K562 (cell line): ENCODE measurements at regions of chr19 and their contacts with region 1.

Region 1: DNA sequence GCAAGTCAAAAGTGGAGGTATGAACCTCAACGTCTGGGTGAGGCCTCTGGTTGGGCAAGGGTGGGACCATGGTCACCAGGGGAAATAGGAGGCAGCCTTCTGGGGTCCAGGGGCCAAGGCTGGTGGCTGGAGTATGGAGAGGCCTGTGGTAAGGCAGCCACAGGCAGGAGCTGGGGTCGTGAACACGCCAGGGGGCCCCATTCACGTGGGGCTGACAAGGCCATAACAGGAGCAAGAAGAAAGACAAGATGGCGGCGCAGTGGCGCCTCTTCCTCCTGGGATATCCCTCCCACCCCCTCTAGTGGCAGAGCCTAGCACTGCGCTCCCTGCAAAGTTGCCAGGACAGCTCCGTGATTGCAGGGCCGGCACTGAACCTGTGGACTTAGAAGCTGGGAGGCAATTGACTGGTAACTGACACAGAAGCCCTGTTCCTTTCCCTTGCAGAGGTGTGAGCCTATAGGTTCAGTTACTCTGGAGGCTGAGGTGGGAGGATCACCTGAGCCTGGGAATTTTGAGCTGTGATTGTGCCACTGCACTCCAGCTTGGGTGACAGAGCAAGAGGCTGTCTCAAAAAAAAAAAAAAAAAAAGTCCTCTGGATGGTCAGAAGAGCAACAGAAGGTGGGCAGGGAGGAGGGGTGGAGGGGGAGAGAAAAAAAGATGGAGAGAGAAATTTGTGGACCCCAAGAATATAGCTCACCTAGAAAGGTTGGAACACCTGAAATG is 19.7 kb upstream of the EDDM13 start:
- DNase-seq: peak; percentile 80 to 93 (median 81)
- ATAC-seq: peak; percentile 92
- H3K4me3 ChIP-seq: no peak overlapping the region
- H3K27ac ChIP-seq: peak overlapping the region; percentile 52; the same call in 2 of the 3 replicates
- H3K4me1 ChIP-seq: peaks cover 23 to 24% of the 10 kb centered on the region in 2 experiments
- H3K27me3 ChIP-seq: no peaks in the 10 kb centered on the region
- CTCF ChIP-seq: peak; percentile 94 to 96 (median 95)
- EP300 ChIP-seq: no peak
- POLR2A ChIP-seq: no peak
- RAD21 ChIP-seq: peak; percentile 61 to 87

Region 2: DNA sequence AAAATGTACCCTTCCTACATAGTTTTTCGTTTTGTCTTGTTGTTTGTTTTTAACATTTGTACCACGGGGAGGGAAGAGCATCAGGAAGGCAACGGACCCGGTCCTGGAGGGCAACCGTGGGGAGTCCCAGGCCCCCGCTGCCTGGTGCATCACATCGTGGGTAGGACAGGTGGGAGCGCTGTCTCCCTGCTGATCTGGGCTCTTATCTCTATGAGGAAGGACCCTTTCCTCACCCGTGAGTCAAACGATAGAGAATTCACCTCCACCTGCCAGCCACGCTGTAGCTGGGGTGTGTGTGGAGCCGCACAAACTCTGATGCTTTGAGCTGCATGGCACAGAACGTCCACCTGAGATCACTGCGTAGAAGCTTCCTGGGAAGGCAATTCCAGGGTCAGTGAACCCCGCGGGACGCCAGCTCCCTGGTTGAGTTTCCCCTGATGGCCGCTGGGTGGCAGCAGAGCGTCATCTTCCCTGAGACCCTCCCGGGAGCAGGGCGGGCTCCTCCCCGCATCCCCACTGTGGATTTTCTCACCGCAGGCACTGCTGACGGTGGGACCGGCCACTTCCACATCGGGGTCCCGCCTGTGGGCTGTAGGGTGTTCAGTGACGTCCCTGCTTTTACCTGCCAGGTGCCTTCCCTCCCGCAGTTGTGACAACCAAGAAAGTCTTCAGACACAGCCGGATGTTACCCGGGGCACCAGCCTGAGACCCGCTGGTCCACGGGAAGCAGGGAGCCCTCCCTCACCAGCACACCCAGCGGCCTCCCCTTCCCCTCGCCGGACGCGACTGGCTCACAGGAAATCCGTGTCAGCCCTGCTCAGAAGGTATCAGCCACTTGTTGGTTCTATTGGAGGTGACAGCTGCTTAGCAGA is 186.5 kb before region 1 on chr19:
- CTCF ChIA-PET with region 1: interaction called, 6 read pairs
- POLR2A ChIA-PET with region 1: no interaction called
- in situ Hi-C with region 1: no loop called
- intact Hi-C with region 1: loop called (anchors 2 kb)
- DNase-seq: peak; percentile 76 to 93 (median 88)
- ATAC-seq: peak; percentile 93
- H3K4me3 ChIP-seq: no peak overlapping the region
- H3K27ac ChIP-seq: no peak overlapping the region
- H3K4me1 ChIP-seq: peaks cover 3 to 7% of the 10 kb centered on the region in 2 experiments; a peak in 4 of 5 replicates
- H3K27me3 ChIP-seq: peaks cover 5 to 11% of the 10 kb centered on the region in 2 experiments; a peak in 1 of 5 replicates
- CTCF ChIP-seq: peak; percentile 82 to 92 (median 84)
- EP300 ChIP-seq: no peak
- POLR2A ChIP-seq: no peak
- RAD21 ChIP-seq: peak; percentile 70 to 85

Region 3: GRCh38 chr19:56155124-56155687 is 97.7 kb before region 1 on chr19:
- CTCF ChIA-PET with region 1: no interaction called
- POLR2A ChIA-PET with region 1: no interaction called
- in situ Hi-C with region 1: no loop called
- intact Hi-C with region 1: loop called (anchors 1 kb)
- DNase-seq: peak; percentile 43 to 54 (median 50)
- ATAC-seq: peak; percentile 94
- H3K4me3 ChIP-seq: no peak overlapping the region
- H3K27ac ChIP-seq: no peak overlapping the region
- H3K4me1 ChIP-seq: peaks cover 0 to 4% of the 10 kb centered on the region in 2 experiments; a peak in 1 of 5 replicates
- H3K27me3 ChIP-seq: no peaks in the 10 kb centered on the region
- CTCF ChIP-seq: peak; percentile 66 to 74 (median 69)
- EP300 ChIP-seq: no peak
- POLR2A ChIP-seq: no peak
- RAD21 ChIP-seq: peak; percentile 35 to 60; a peak in 3 of 4 replicates

Region 4: DNA sequence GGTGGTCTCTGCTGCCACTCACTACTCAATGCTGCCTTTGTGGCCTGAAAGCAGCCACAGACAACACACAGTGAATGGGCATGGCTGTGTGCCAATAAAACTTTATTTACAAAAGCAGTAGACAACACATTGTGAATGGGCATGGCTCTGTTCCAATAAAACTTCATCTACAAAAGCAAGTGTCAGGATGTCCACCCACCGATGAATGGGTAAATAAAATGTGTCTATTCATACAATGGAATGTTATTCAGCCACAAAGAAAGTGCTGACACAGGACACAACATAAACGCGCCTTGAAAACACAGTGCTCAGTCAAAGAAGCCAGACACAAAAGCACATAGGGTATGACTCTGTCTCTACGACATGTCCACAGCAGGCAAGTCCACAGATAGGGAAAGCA is 41.7 kb after region 1 on chr19:
- CTCF ChIA-PET with region 1: no interaction called
- POLR2A ChIA-PET with region 1: no interaction called
- in situ Hi-C with region 1: no loop called
- intact Hi-C with region 1: no loop called
- DNase-seq: no peak
- ATAC-seq: no peak
- H3K4me3 ChIP-seq: no peak overlapping the region
- H3K27ac ChIP-seq: no peak overlapping the region
- H3K4me1 ChIP-seq: no peaks in the 10 kb centered on the region
- H3K27me3 ChIP-seq: no peaks in the 10 kb centered on the region
- CTCF ChIP-seq: no peak
- EP300 ChIP-seq: no peak
- POLR2A ChIP-seq: no peak
- RAD21 ChIP-seq: no peak

Region 5: DNA sequence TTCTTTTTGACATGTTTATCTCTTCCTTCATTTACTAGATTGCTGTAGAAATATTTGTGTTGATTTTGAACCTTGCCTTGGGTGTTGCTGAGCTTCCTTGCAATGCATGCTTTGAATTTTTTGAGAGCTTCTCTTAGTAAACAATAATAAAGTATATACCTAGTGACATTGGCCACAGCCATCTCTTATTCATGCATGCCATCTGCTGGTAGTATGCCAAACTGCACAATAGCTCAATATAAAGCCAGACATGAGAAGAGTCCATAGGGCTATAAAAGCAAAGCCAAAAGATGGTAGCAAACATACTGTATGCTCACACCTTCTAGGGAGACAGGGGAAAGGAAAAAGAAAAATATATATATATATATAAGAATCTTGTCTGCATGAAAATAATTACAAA is 80.6 kb after region 1 on chr19:
- CTCF ChIA-PET with region 1: interaction called, 46 read pairs
- POLR2A ChIA-PET with region 1: interaction called, 7 read pairs
- in situ Hi-C with region 1: no loop called
- intact Hi-C with region 1: loop called (anchors 1 kb)
- DNase-seq: peak; percentile 48 to 72 (median 55)
- ATAC-seq: peak; percentile 89
- H3K4me3 ChIP-seq: no peak overlapping the region
- H3K27ac ChIP-seq: no peak overlapping the region
- H3K4me1 ChIP-seq: no peaks in the 10 kb centered on the region
- H3K27me3 ChIP-seq: no peaks in the 10 kb centered on the region
- CTCF ChIP-seq: peak; percentile 69 to 94 (median 85)
- EP300 ChIP-seq: no peak
- POLR2A ChIP-seq: no peak
- RAD21 ChIP-seq: peak; percentile 92 to 98

Region 6: GRCh38 chr19:56547535-56547934 is 294.7 kb after region 1 on chr19:
- CTCF ChIA-PET with region 1: no interaction called
- POLR2A ChIA-PET with region 1: no interaction called
- in situ Hi-C with region 1: no loop called
- intact Hi-C with region 1: loop called (anchors 10 kb)
- DNase-seq: peak; percentile 20 to 35 (median 33)
- ATAC-seq: no peak
- H3K4me3 ChIP-seq: no peak overlapping the region
- H3K27ac ChIP-seq: no peak overlapping the region
- H3K4me1 ChIP-seq: no peaks in the 10 kb centered on the region
- H3K27me3 ChIP-seq: no peaks in the 10 kb centered on the region
- CTCF ChIP-seq: peak; percentile 46 to 55 (median 53)
- EP300 ChIP-seq: no peak
- POLR2A ChIP-seq: no peak
- RAD21 ChIP-seq: peak in 1 of 2 experiments; percentile 38; a peak in 2 of 4 replicates